Activated T-helper 1 cell treated with anti-CD3 and anti-CD28 coated beads, Interleukin-12 subunit alpha, Interleukin-12 subunit beta, Interleukin-2, Interleukin-4 antibody, amounts not matched to agents 30 ng/mL and 10 ng/mL and 1 ng/mL, durations not matched to agents 14 hours and 24 hours and 36 hours (primary cell): ENCODE measurements at regions of chr2 and their contacts with region 1.

Region 1: DNA sequence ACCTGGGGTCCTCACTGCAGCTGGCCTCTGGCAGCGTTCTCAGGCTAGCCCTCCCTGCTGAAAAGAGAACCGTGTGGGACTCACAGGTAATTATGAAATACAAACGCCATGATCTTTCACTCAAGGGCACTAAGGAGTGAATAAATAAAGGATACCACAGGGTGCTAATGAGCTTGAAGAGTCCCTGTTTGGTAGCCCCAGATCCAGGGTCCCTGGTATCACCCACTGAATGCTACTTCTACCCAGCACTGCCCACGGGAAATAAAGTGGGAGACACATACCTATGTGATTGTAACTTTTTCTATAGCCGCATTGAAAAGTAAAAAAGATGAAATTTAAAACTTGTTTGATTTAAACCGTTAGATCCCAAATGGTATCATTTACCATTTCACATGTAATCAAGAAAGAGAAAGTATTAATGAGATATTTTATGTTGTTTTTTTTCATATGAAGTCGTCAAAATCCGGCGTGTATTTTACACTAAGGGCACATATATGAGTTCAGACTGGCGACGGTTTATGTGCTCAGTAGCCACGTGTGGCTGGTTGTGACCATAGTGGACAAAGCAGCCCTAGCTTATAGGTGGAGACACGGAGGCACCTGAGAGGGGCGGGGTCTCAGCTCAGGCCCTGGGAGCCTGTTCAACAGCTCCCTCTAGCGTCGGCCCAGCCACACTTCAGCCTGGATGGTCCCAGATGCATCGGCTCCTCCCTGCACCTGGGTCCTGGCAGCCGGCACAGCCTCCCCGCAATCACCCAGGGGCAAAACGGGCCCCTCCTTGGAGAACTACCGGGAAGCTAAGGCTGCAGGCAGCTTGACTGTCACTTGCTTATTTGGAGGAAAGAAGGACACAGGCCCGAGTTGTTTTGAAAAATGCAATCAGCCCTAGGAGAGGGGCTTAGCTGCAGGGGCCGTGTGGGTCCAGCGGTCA is 39.2 kb downstream of the ODC1 start:
- DNase-seq: peak; percentile 76
- H3K4me3 Mint-ChIP-seq: peak overlapping the region; percentile 80
- H3K27ac Mint-ChIP-seq: peak overlapping the region; percentile 93
- H3K4me1 Mint-ChIP-seq: peaks cover 54% of the 10 kb centered on the region
- H3K27me3 Mint-ChIP-seq: no peaks in the 10 kb centered on the region

Region 2: DNA sequence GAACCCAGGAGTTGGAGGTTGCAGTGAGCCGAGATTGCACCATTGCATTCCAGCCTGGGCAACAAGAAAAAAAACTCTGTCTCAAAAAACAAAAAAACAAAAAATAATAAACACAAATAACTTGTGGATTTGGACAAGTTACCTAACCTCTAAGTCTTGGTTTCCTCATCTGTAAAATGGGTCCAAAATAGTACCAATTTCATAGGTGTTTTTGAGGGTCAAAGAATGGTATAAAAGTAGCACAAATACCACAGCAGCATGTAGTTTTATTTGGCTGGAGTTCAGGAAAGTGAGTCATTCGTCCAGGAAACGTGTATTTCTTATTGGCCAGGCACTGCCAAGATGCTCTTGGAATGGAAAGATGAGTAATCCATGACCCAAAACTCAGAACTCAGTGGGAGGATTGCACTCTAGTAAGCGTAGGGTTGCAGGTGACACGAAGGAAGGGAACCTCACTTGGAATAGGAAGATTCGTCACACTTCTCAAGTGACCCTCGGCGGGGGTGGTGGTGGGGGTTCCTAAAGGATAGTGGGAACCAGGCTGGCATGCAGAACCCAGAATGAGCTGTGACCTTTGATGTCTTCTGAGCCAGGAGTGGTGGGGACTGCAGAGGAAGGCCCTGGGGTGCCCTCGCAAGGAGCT is 433.0 kb before region 1 on chr2:
- intact Hi-C with region 1: loop called (anchors 1 kb)
- DNase-seq: no peak
- H3K4me3 Mint-ChIP-seq: no peak overlapping the region
- H3K27ac Mint-ChIP-seq: peak overlapping the region; percentile 4
- H3K4me1 Mint-ChIP-seq: peaks cover 72% of the 10 kb centered on the region
- H3K27me3 Mint-ChIP-seq: peaks cover 4% of the 10 kb centered on the region

Region 3: DNA sequence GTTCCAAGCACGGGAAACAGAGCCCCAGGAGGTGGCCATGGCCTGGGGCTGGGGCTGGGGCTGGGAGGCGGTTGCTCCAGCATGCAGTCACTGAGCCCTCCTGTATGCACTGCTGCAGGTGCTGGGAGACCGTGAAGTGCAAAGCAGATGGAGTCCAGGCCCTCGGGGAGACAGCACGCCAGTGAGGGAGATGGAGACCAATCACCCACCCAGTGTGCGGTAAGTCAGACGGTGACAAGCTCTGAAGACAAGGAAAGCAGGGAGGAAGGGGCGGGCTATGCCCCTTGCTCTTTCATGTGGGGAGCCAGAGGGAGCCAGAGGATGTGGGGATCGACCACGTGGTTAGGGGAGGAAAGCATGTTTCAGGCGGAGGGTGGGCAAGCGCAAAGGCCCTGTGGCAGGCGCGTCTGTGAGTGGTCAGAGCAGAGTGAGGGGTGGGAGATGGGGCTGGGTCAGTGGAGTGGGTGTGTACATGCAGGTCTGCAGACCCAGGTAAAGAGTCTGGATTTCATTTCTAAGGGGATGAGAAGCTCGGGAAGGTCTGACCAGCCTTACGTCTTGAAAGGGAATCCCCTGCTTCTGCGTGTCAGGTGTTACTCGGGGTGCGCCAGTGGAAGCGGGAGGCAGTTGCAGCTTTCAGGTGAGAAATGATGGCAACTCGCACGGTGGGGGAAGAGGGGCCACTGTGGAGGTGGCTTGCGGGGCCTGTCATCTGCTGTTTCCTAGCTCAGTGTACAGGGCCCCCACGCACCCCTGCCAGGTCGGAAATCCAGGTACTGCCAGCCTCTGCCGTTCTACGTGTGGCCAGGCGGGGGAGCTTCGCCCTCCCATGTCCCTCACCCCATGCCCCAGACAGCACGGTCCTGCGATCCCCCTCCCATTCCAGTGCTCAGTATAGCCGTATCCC is 266.9 kb before region 1 on chr2:
- intact Hi-C with region 1: loop called (anchors 1 kb)
- DNase-seq: no peak
- H3K4me3 Mint-ChIP-seq: peak overlapping the region; percentile 24
- H3K27ac Mint-ChIP-seq: peak overlapping the region; percentile 49
- H3K4me1 Mint-ChIP-seq: peaks cover 31% of the 10 kb centered on the region
- H3K27me3 Mint-ChIP-seq: no peaks in the 10 kb centered on the region

Region 4: GRCh38 chr2:10331027-10331701 is 77.8 kb before region 1 on chr2:
- intact Hi-C with region 1: loop called (anchors 1 kb)
- DNase-seq: peak; percentile 62
- H3K4me3 Mint-ChIP-seq: peak overlapping the region; percentile 86
- H3K27ac Mint-ChIP-seq: peak overlapping the region; percentile 95
- H3K4me1 Mint-ChIP-seq: peaks cover 59% of the 10 kb centered on the region
- H3K27me3 Mint-ChIP-seq: no peaks in the 10 kb centered on the region

Region 5: DNA sequence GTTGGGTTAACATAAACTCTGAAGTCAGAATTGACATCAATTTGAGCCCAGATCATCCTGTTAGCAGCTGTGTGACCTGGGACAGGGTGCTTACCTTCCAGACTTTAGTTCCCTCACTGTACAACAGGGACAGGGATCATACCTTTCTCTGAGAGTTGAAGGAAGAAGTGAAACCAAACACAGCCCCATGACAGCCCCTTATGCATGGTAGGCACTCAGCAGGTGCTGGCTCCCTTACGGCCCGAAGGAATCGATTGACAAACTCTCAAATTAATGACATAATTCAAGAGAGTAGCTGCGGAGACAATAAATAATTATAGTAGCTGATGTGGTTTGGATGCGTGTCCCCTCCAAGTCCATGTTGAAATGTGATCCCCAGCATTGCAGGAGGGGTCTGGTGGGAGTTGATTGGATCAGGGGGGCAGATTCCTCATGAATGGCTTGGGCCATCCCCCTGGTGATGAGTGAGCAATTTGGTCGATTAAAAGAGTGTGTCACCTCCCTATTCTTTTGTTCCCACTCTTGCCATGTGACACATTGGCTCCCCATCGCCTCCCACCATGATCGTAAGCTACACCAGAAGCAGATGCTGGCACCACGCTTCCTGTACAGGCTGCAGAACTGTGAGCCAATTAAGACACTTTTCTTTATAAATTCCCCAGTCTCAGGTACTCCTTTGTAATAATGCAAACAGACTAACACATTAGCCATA is 33.2 kb before region 1 on chr2:
- intact Hi-C with region 1: no loop called
- DNase-seq: no peak
- H3K4me3 Mint-ChIP-seq: no peak overlapping the region
- H3K27ac Mint-ChIP-seq: no peak overlapping the region
- H3K4me1 Mint-ChIP-seq: peaks cover 54% of the 10 kb centered on the region
- H3K27me3 Mint-ChIP-seq: no peaks in the 10 kb centered on the region

Region 6: GRCh38 chr2:10434886-10435819 is 26.2 kb after region 1 on chr2:
- intact Hi-C with region 1: loop called (anchors 2 kb)
- DNase-seq: peak; percentile 65
- H3K4me3 Mint-ChIP-seq: no peak overlapping the region
- H3K27ac Mint-ChIP-seq: peak overlapping the region; percentile 35
- H3K4me1 Mint-ChIP-seq: peaks cover 6% of the 10 kb centered on the region
- H3K27me3 Mint-ChIP-seq: peaks cover 2% of the 10 kb centered on the region